ENCODE measurements at regions of chr22 and their contacts with region 1.

Region 1: DNA sequence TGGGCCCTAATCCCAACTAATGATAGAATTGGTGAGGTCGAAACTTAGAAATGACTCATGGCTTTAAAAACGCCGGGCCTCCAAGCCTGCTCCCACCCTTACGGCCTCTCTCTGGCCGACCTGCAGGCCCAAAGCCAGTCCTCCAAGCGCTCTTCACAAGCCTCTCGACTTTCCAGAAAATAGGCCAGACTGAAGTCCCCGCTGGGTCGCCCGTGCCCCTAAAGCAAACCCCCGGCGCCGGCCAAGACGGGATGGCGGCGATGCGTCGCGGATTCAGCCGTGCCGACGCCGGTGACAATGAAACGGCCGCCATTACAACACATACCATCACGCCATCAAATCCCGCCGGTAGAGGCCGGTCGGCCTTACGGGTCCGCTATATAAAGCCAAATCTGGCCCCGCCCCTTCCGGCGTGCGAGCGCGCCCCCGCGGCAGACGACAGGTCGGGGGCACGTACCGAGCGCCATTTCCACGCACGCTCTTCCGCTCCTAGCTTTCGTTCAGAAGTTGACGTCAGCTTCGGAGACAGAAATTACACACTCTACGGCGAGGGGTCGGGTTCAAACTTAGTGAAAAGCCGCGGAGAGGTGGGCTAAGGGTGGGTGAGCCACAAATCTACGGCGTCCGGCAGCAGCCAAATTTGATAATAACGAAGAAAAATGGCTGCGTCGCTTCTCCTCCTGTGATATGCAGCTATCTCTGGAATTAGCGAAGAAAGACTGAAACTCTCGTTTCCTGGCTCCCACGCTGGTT is at the start of gene RPL3:
- DNase-seq: peak; percentile 98
- ATAC-seq: peak; percentile 65
- H3K4me3 ChIP-seq: peak within 1 kb of the TSS; percentile 76 to 94 (median 87)
- H3K27ac ChIP-seq: peak within 1 kb of the TSS; percentile 97
- H3K4me1 ChIP-seq: peaks cover 51% of the 10 kb centered on the region
- H3K27me3 ChIP-seq: no peaks in the 10 kb centered on the region; a peak in 1 of 5 replicates
- CTCF ChIP-seq: peak; percentile 42; the same call in 1 of the 2 replicates
- EP300 ChIP-seq: peak in 1 of 2 experiments; percentile 4; a peak in 1 of 4 replicates
- POLR2A ChIP-seq: peak; percentile 99 to 100
- RAD21 ChIP-seq: peak; percentile 52; the same call in 1 of the 2 replicates
- total RNA-seq, gene RPL3: 1,051 and 1,499 TPM in 2 replicates

Region 2: DNA sequence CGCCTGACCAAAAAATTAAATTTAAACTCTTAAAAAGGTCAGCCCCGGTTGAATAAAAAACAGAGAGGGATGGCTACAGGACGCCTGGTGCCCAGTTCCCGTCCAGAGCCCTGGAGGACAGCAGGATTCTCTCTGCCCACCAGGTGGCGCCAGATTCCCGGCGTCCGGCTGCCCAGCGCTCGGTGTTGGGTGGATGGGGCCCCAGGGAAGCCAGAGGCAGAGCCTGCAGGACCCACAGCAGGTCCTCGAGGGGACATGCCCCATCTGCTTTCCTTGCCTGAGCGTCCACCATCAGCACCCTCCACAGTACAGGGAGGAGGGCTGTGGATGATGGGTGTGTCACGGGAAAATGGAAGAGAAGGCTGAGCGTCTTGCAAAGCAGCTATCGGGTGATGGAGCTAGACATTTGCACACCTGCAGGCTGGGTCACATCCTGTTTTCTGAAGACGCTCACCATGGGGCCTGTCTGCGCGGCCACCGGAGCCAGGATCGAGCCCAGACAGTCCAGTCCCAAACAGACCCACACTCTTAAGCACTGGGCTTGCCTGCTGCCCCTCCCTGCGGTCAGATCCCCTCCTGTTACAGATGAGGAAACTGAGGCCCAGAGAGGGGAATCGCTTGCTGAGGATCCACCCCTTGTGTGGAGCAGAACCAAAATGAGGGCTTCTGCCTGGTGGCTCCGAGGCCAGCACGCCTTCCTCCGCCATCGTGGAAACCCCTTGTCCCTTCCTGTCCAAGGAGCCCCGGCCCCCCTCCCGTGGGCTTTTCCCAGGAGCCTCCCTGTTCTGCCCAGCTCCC is 148.4 kb before region 1 on chr22:
- CTCF ChIA-PET with region 1: interaction called, 4 read pairs
- POLR2A ChIA-PET with region 1: interaction called, 72 read pairs
- in situ Hi-C with region 1: loop called (anchors 5 kb)
- intact Hi-C with region 1: no loop called
- DNase-seq: peak; percentile 53
- ATAC-seq: peak; percentile 80
- H3K4me3 ChIP-seq: peak overlapping the region in 1 of 3 experiments; percentile 13; a peak in 1 of 6 replicates
- H3K27ac ChIP-seq: no peak overlapping the region
- H3K4me1 ChIP-seq: peaks cover 54% of the 10 kb centered on the region
- H3K27me3 ChIP-seq: peaks cover 0 to 2% of the 10 kb centered on the region in 2 experiments; a peak in 1 of 5 replicates
- CTCF ChIP-seq: peak; percentile 97
- EP300 ChIP-seq: no peak
- POLR2A ChIP-seq: no peak
- RAD21 ChIP-seq: peak; percentile 97

Region 3: GRCh38 chr22:39283322-39284004 is 36.0 kb before region 1 on chr22:
- CTCF ChIA-PET with region 1: no interaction called
- POLR2A ChIA-PET with region 1: interaction called, 18 read pairs
- in situ Hi-C with region 1: no loop called
- intact Hi-C with region 1: no loop called
- DNase-seq: peak; percentile 86
- ATAC-seq: peak; percentile 88
- H3K4me3 ChIP-seq: peak overlapping the region in 1 of 3 experiments; percentile 51; a peak in 1 of 6 replicates
- H3K27ac ChIP-seq: peak overlapping the region; percentile 52
- H3K4me1 ChIP-seq: peaks cover 75% of the 10 kb centered on the region
- H3K27me3 ChIP-seq: peaks cover 4 to 10% of the 10 kb centered on the region in 2 experiments; a peak in 4 of 5 replicates
- CTCF ChIP-seq: peak; percentile 24
- EP300 ChIP-seq: peak in 1 of 2 experiments; percentile 65; a peak in 1 of 4 replicates
- POLR2A ChIP-seq: peak in 1 of 2 experiments; percentile 39; a peak in 1 of 4 replicates
- RAD21 ChIP-seq: no peak

Region 4: GRCh38 chr22:39306581-39307361 is 12.7 kb before region 1 on chr22:
- CTCF ChIA-PET with region 1: no interaction called
- POLR2A ChIA-PET with region 1: interaction called, 63 read pairs
- in situ Hi-C with region 1: no loop called
- intact Hi-C with region 1: no loop called
- DNase-seq: no peak
- ATAC-seq: peak; percentile 8
- H3K4me3 ChIP-seq: no peak overlapping the region
- H3K27ac ChIP-seq: no peak overlapping the region
- H3K4me1 ChIP-seq: peaks cover 67% of the 10 kb centered on the region
- H3K27me3 ChIP-seq: no peaks in the 10 kb centered on the region
- CTCF ChIP-seq: peak; percentile 84
- EP300 ChIP-seq: no peak
- POLR2A ChIP-seq: no peak
- RAD21 ChIP-seq: peak; percentile 60

Region 5: DNA sequence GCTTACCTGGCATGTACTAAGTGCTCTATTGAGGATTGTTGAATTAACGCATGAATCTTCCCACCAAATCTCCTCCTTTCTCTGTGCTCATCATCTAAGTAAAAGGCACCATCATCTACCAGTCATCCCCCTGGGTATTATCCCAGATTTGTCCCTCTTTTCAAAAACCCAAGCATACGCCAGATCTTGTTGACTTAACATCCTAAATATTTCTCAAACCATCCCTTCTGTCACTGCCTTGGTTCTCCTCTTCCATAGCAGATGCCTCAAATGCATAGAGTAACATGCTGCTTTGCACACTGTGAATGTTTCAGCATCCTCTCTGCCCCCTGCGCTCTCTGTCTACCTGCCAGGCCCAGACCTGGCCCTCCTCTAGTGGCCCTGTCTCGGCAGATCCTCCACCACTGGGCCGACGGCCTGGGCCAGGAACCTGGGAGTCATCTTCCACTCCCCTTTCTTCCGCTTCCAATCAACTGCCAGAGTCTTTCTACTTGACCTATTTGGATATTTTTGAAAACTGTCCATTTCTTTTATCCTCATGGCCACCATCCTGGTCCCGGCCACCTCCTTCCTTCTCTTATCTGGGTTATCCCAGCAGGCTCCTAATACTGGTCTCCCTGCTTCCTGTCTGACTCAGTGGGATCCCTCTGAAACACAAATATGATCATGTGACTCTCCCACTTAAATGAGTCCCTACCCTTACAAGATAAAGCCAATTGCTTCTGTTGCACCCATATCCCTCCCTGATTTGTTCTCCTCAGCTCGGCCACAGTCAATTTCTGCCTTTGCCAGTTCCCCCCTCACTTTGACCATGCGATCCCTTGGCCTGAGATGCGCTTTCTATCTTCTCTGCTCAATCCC is 76.7 kb after region 1 on chr22:
- CTCF ChIA-PET with region 1: no interaction called
- POLR2A ChIA-PET with region 1: interaction called, 17 read pairs
- in situ Hi-C with region 1: no loop called
- intact Hi-C with region 1: no loop called
- DNase-seq: no peak
- ATAC-seq: no peak
- H3K4me3 ChIP-seq: no peak overlapping the region
- H3K27ac ChIP-seq: no peak overlapping the region
- H3K4me1 ChIP-seq: peaks cover 10% of the 10 kb centered on the region
- H3K27me3 ChIP-seq: no peaks in the 10 kb centered on the region; a peak in 1 of 5 replicates
- CTCF ChIP-seq: no peak
- EP300 ChIP-seq: no peak
- POLR2A ChIP-seq: no peak
- RAD21 ChIP-seq: no peak

Region 6: DNA sequence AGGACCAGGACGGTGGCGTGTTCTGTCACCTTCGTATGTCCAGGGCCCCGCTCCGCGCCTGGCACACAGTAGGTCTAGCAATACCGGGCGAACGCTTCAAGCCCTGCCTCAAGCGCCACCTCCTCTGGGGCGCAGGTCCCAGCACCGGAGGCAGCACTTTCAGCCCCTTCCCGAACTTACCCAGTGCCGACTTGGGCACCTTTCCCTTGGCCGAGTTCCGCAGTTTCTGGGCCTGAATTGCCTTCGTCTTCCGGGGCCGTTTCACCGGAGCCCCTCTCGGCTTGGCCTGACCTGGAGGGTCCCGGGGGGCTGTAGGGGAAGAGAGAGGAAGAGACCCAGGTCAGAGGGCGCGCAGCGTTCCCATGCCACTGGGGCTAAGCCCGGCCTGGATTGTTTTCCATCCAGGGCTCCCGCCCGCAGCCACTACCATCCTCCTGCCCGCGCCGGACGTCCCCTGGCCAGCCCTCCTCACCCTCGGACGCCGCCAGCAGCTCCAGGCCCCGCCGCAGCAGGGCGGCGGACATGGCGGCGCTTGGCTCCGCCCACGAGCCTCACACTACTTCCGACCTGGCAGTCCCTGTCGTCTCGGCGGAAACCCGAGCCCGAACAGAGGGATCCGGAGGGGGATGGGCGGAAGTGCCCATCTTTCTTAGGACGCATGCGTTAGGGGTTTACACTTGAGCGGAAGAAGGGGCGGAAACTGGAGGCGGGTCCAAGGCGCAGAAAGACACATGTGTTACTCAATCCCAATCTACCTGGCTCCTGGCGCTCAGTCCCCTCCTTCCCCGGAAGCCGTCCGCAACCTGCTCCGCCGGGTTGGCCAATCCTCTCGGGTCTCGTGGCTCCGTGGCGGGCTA is 213.0 kb after region 1 on chr22 and contains the start of gene RPS19BP1:
- CTCF ChIA-PET with region 1: no interaction called
- POLR2A ChIA-PET with region 1: interaction called, 15 read pairs
- in situ Hi-C with region 1: no loop called
- intact Hi-C with region 1: no loop called
- DNase-seq: peak; percentile 99
- ATAC-seq: peak; percentile 60
- H3K4me3 ChIP-seq: peak within 1 kb of the TSS; percentile 80 to 97 (median 96)
- H3K27ac ChIP-seq: peak within 1 kb of the TSS; percentile 76
- H3K4me1 ChIP-seq: peaks cover 68% of the 10 kb centered on the region
- H3K27me3 ChIP-seq: peaks cover 0 to 14% of the 10 kb centered on the region in 2 experiments; a peak in 3 of 5 replicates
- CTCF ChIP-seq: peak; percentile 3; the same call in 1 of the 2 replicates
- EP300 ChIP-seq: peak in 1 of 2 experiments; percentile 49; a peak in 1 of 4 replicates
- POLR2A ChIP-seq: peak; percentile 85 to 91
- RAD21 ChIP-seq: no peak; the same call in 1 of the 2 replicates
- total RNA-seq, gene RPS19BP1: 81.3 and 88.2 TPM in 2 replicates